ENCODE measurements at regions of chr4 and their contacts with region 1.

Region 1: GRCh38 chr4:116180157-116180601 is 905.2 kb downstream of the TRAM1L1 start:
- DNase-seq: peak; percentile 14
- H3K4me3 ChIP-seq: peak overlapping the region in 2 of 3 experiments; percentile 14 to 40
- H3K27ac ChIP-seq: no peak overlapping the region
- H3K4me1 ChIP-seq: peaks cover 2% of the 10 kb centered on the region
- H3K27me3 ChIP-seq: no peaks in the 10 kb centered on the region
- CTCF ChIP-seq: peak; percentile 13 to 27
- POLR2A ChIP-seq: no peak

Region 2: GRCh38 chr4:116108606-116109005 is 71.6 kb before region 1 on chr4:
- CTCF ChIA-PET with region 1: no interaction called
- POLR2A ChIA-PET with region 1: no interaction called
- dilution Hi-C with region 1: no loop called
- intact Hi-C with region 1: no loop called
- DNase-seq: no peak
- H3K4me3 ChIP-seq: no peak overlapping the region
- H3K27ac ChIP-seq: no peak overlapping the region
- H3K4me1 ChIP-seq: no peaks in the 10 kb centered on the region
- H3K27me3 ChIP-seq: no peaks in the 10 kb centered on the region
- CTCF ChIP-seq: no peak
- POLR2A ChIP-seq: no peak

Region 3: GRCh38 chr4:116469582-116469981 is 289.4 kb after region 1 on chr4:
- CTCF ChIA-PET with region 1: no interaction called
- POLR2A ChIA-PET with region 1: no interaction called
- dilution Hi-C with region 1: no loop called
- intact Hi-C with region 1: no loop called
- DNase-seq: no peak
- H3K4me3 ChIP-seq: no peak overlapping the region
- H3K27ac ChIP-seq: no peak overlapping the region
- H3K4me1 ChIP-seq: no peaks in the 10 kb centered on the region
- H3K27me3 ChIP-seq: no peaks in the 10 kb centered on the region
- CTCF ChIP-seq: no peak
- POLR2A ChIP-seq: no peak

Region 4: DNA sequence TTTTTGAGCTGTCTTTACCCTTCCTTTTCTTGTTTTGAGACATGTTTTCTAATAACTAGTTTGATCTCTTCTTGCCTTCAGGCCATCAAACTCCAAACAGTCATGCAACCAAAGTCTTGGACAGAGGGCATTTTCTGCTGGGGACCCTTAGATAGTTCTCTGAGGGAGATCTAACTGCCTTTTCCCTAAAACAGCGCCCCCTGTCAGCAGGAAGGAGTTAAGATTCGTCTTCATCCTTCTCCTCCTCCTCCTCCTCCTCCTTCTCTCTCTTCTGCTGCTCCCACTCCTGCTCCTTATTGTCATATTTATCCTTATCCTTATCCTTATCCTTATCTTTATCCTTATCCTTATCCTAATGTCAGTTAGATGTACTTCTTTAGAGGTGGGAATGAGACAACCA is 488.0 kb after region 1 on chr4:
- CTCF ChIA-PET with region 1: interaction called, 4 read pairs
- POLR2A ChIA-PET with region 1: no interaction called
- dilution Hi-C with region 1: no loop called
- intact Hi-C with region 1: loop called (anchors 1 kb)
- DNase-seq: no peak
- H3K4me3 ChIP-seq: no peak overlapping the region
- H3K27ac ChIP-seq: no peak overlapping the region
- H3K4me1 ChIP-seq: no peaks in the 10 kb centered on the region
- H3K27me3 ChIP-seq: no peaks in the 10 kb centered on the region
- CTCF ChIP-seq: peak in 1 of 2 donors; percentile 34
- POLR2A ChIP-seq: no peak

Region 5: GRCh38 chr4:116702951-116703350 is 522.8 kb after region 1 on chr4:
- CTCF ChIA-PET with region 1: interaction called, 20 read pairs
- POLR2A ChIA-PET with region 1: no interaction called
- dilution Hi-C with region 1: no loop called
- intact Hi-C with region 1: no loop called
- DNase-seq: peak; percentile 26
- H3K4me3 ChIP-seq: no peak overlapping the region
- H3K27ac ChIP-seq: no peak overlapping the region
- H3K4me1 ChIP-seq: no peaks in the 10 kb centered on the region
- H3K27me3 ChIP-seq: no peaks in the 10 kb centered on the region
- CTCF ChIP-seq: peak; percentile 8 to 23
- POLR2A ChIP-seq: no peak

Measured in endothelial cell of umbilical vein (primary cell).